Panc1 (cell line): ENCODE measurements at regions of chr1 and their contacts with region 1.

Region 1: GRCh38 chr1:48471691-48472576 is at the start of gene SPATA6:
- DNase-seq: peak; percentile 78
- ATAC-seq: peak; percentile 94
- H3K4me3 ChIP-seq: peak within 1 kb of the TSS; percentile 82 to 88
- H3K27ac ChIP-seq: peak within 1 kb of the TSS; percentile 93
- H3K4me1 ChIP-seq: peaks cover 13% of the 10 kb centered on the region
- H3K27me3 ChIP-seq: no peaks in the 10 kb centered on the region
- CTCF ChIP-seq: peak; percentile 14
- total RNA-seq, gene SPATA6: 18.2 TPM

Region 2: DNA sequence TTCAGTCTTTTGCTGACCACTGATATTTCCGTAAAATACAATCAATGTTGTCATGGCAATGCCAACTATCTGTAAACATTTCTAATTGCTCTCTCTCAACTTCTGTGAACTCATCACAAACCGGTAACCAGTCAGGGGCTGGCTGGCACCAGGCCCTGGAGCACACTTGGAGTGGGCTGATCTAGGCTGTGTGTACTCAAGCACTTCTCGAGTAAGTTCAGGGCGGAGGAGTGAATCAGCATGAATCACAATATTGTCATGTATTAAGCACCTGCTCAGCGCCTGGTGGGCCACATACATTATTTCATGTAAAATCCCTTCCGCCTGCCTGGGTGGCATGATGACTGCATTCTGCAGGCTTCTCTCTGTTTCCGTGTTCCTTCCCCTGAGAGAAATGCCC is 821.7 kb before region 1 on chr1:
- CTCF ChIA-PET with region 1: no interaction called
- POLR2A ChIA-PET with region 1: interaction called, 16 read pairs
- in situ Hi-C with region 1: no loop called
- intact Hi-C with region 1: no loop called
- DNase-seq: peak; percentile 72
- ATAC-seq: peak; percentile 75
- H3K4me3 ChIP-seq: no peak overlapping the region
- H3K27ac ChIP-seq: no peak overlapping the region
- H3K4me1 ChIP-seq: no peaks in the 10 kb centered on the region
- H3K27me3 ChIP-seq: no peaks in the 10 kb centered on the region
- CTCF ChIP-seq: no peak

Region 3: DNA sequence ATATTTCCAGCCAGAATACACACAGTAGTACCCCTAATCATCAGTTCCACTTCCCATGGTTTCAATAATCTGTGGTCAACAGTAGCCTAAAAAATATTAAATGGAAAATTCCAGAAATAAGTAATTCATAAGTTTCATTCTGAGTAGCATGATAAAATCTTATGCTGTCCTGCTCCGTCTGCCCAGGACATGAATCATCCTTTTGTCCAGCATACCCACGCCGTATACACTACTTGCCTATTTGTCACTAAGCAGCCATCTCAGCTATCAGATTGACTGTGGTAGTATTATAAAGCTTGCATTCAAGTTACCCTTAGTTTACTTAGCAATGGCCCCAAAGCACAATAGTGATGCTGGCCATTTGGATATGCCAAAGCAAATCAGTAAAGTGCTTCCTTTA is 130.7 kb before region 1 on chr1:
- CTCF ChIA-PET with region 1: no interaction called
- POLR2A ChIA-PET with region 1: no interaction called
- in situ Hi-C with region 1: no loop called
- intact Hi-C with region 1: no loop called
- DNase-seq: no peak
- ATAC-seq: no peak
- H3K4me3 ChIP-seq: no peak overlapping the region
- H3K27ac ChIP-seq: no peak overlapping the region
- H3K4me1 ChIP-seq: no peaks in the 10 kb centered on the region
- H3K27me3 ChIP-seq: no peaks in the 10 kb centered on the region
- CTCF ChIP-seq: no peak

Region 4: GRCh38 chr1:48536477-48536876 is 64.5 kb after region 1 on chr1:
- CTCF ChIA-PET with region 1: no interaction called
- POLR2A ChIA-PET with region 1: no interaction called
- in situ Hi-C with region 1: no loop called
- intact Hi-C with region 1: no loop called
- DNase-seq: no peak
- ATAC-seq: no peak
- H3K4me3 ChIP-seq: no peak overlapping the region
- H3K27ac ChIP-seq: no peak overlapping the region
- H3K4me1 ChIP-seq: no peaks in the 10 kb centered on the region
- H3K27me3 ChIP-seq: no peaks in the 10 kb centered on the region
- CTCF ChIP-seq: no peak